ENCODE measurements at regions of chr2 and their contacts with region 1.

Region 1: GRCh38 chr2:176096986-176097819 is 2.4 kb upstream of the HOXD12 start:
- DNase-seq: peak; percentile 85

Region 2: DNA sequence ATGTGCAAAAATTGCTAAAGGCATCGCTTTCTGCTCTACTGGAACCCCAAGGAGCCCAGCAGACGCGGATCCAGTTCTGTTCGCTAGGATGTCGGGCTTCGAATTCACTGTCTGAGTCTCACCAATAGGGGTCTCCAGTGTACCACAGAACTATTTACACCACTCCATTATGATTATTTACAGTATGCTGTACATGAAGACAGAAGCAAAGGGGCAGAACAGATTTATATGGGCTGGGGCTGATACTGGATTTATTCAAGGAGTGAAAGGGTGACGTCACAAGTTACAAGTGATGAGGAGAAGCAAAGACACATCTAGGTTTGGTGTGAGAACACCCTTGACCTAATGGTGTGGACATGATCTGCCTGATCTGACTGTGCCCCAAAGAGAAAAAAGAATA is 730.4 kb before region 1 on chr2:
- in situ Hi-C with region 1: loop called (anchors 25 kb)
- DNase-seq: peak; percentile 69

Region 3: DNA sequence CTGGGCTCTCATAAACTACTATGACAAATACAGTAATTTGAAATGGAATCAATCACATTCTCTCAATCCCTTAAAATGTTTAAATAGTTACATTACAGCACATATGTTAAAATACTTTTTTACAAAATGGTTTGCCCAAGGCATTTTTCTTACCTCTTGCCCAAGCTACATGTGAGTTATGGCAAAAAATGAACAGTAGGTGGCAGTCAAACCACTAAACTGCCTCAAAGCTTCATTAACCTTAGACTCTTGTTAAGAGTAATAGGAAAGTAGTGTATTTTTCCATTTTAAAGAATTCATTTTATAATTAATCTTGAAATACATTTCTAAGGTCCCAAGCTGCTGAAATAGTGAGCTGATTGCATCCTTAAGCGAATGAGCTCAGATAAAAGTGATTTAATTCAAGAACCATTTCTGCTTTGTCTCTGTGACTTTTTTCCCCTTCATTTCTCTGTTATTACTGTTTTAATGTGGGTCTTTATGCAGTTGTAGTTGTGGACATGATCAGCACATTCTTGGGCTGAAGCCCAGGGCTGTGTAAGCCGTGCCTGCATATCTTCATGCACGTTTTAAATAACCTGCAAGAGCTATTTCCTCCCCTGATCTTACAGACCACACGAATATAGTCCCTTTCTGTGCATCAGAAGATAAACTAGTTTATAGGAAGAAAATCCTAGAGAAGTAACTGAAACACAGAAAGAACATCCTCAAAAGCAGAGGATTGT is 406.9 kb before region 1 on chr2:
- in situ Hi-C with region 1: loop called (anchors 25 kb)
- DNase-seq: peak; percentile 71

Region 4: GRCh38 chr2:176380341-176380740 is 283.1 kb after region 1 on chr2:
- in situ Hi-C with region 1: no loop called
- DNase-seq: no peak

Measured in KBM-7 (cell line).